ENCODE measurements at regions of chr20 and their contacts with region 1.

Region 1: GRCh38 chr20:47620808-47621805 is 119.4 kb downstream of the NCOA3 start:
- DNase-seq: peak; percentile 64
- H3K27ac ChIP-seq: no peak overlapping the region
- CTCF ChIP-seq: peak; percentile 99

Region 2: DNA sequence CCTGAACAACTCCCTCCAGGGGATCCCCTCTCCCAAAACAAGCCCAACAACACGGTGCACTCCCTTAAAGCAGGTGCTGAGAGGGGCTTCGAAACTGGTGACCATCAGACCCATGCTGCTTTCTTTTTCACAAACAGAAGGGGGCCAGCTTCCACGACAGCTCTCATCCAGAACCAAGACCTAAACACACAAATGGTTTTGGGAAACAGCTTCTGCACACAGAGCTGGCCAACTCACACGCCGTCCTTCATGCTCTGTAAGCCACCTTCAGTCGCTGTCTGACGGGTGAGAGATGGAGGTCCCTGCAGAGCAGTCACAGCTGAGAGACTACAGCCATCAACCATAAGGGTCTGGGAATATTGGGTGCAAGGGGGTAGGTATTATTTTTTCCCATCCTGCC is 340.9 kb before region 1 on chr20:
- CTCF ChIA-PET with region 1: no interaction called
- POLR2A ChIA-PET with region 1: no interaction called
- DNase-seq: no peak
- H3K27ac ChIP-seq: peak overlapping the region; percentile 63
- CTCF ChIP-seq: no peak

Region 3: DNA sequence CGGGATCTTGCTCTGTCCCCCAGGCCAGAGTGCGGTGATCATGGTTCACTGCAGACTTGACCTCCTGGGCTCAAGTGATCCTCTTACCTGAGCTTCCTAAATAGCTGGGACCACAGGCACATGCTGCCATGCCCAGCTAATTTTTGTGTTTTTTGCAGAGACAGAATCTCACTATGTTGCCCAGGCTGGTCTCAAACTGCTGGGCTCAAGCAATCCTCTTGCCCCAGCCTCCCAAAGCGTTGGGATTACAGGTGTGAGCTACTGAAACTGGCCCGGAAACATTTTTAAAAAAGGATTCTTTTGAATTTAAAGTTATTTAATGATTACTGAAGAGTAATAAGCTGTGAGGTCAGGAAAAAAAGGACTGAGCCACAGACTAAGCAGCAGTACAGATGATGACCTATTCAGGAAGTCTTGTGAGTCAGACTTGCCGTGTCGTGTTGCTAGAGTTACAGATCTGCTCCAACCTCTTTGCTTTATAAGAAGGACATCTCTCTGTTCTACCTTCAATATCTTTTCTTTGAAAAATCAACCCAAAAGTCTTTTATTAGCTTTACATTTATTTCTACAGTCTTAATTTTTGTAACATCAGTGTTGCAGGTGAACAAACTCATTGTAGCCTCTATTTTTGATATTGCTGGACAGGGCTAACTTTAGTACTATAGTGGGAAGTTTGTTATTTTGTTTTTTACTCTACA is 10.7 kb before region 1 on chr20:
- CTCF ChIA-PET with region 1: interaction called, 16 read pairs
- POLR2A ChIA-PET with region 1: no interaction called
- DNase-seq: peak; percentile 80
- H3K27ac ChIP-seq: peak overlapping the region; percentile 67
- CTCF ChIP-seq: no peak

Region 4: DNA sequence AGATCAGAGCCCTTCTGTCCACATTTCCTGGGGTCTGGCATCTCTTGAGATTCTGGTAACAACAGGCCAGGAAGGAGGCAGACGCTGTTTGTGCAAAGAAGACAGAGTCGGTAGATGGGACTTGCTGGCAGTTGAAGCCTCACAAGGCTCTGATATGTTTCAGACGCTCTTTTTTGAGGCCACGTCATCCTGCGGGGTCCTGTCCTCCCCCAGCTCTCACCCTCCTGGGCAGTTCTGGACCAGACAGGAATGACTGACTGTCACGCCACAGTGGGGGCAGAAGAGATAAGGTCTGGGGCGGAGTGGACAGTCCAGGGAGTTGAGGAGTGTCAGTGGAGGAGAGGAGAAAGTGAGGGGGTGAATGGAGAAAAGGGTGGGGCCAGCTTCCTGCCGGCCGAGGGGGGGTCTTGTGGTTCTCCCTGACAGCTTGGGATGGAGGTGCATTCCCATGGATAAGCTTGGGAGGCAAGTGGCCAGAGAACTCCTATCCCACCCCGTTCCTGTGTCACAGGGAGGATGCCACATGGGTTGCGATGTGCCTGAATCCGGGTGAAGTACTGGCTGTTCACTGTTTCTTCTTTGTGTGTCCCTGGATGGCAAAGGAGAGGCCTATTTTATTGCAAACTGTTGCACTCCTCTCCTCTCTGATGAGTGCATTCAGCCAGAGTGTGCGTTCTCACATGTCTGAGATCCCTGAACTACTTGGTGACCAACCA is 251.4 kb after region 1 on chr20:
- CTCF ChIA-PET with region 1: no interaction called
- POLR2A ChIA-PET with region 1: no interaction called
- DNase-seq: no peak
- H3K27ac ChIP-seq: no peak overlapping the region
- CTCF ChIP-seq: no peak

Measured in RWPE1 (cell line).